T-cell (primary cell): ENCODE measurements at regions of chr6 and their contacts with region 1.

Region 1: GRCh38 chr6:7025861-7026260 is 81.9 kb upstream of the RREB1 start:
- DNase-seq: no peak
- ATAC-seq: no peak
- H3K4me3 ChIP-seq: no peak overlapping the region
- H3K4me3 Mint-ChIP-seq: no peak overlapping the region
- H3K27ac ChIP-seq: no peak overlapping the region
- H3K27ac Mint-ChIP-seq: no peak overlapping the region
- H3K4me1 ChIP-seq: no peaks in the 10 kb centered on the region
- H3K4me1 Mint-ChIP-seq: no peaks in the 10 kb centered on the region
- H3K27me3 ChIP-seq: peaks cover 0 to 22% of the 10 kb centered on the region in 2 experiments
- H3K27me3 Mint-ChIP-seq: peaks cover 7 to 13% of the 10 kb centered on the region in 2 donors

Region 2: GRCh38 chr6:8057263-8057662 is 1031.4 kb after region 1 on chr6:
- CTCF ChIA-PET with region 1: no interaction called
- POLR2A ChIA-PET with region 1: interaction called in 1 of 2 experiments, 11 read pairs
- DNase-seq: no peak
- ATAC-seq: no peak
- H3K4me3 ChIP-seq: no peak overlapping the region
- H3K4me3 Mint-ChIP-seq: no peak overlapping the region
- H3K27ac ChIP-seq: no peak overlapping the region
- H3K27ac Mint-ChIP-seq: no peak overlapping the region
- H3K4me1 ChIP-seq: no peaks in the 10 kb centered on the region
- H3K4me1 Mint-ChIP-seq: peaks cover 7 to 20% (median 13%) of the 10 kb centered on the region in 3 donors
- H3K27me3 ChIP-seq: no peaks in the 10 kb centered on the region
- H3K27me3 Mint-ChIP-seq: no peaks in the 10 kb centered on the region